Left lung (tissue), 14 donors: ENCODE measurements at regions of chr12 and their contacts with region 1.

Region 1: DNA sequence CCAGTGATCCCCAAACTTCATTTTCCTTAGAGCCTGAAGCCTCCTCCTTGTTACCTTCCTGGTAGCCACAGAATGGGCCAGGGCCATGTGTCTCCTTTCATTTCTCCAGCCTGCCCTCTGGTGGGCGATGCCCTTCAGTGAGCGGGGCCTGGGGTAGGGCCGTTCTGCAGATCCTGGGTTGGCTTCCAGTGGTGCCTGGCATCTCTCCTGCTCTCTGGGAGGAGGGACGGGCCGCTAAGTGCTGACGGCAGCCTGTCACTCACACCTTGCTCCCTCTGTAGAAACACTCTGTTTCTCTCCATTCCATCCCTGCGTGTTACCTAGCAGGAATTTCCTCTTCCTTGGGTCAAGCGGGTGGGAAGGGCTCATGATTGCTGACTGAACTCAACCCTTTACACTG is 232.1 kb downstream of the CACNA1C start:
- DNase-seq: peak in 2 of 4 donors; percentile 64 to 65
- ATAC-seq: peak; percentile 72
- H3K4me3 ChIP-seq: no peak overlapping the region
- H3K27ac ChIP-seq: peak overlapping the region; percentile 27 to 56
- H3K4me1 ChIP-seq: peaks cover 28 to 44% of the 10 kb centered on the region in 2 donors
- H3K27me3 ChIP-seq: peaks cover 0 to 11% of the 10 kb centered on the region in 2 donors
- CTCF ChIP-seq: peak; percentile 39 to 57

Region 2: DNA sequence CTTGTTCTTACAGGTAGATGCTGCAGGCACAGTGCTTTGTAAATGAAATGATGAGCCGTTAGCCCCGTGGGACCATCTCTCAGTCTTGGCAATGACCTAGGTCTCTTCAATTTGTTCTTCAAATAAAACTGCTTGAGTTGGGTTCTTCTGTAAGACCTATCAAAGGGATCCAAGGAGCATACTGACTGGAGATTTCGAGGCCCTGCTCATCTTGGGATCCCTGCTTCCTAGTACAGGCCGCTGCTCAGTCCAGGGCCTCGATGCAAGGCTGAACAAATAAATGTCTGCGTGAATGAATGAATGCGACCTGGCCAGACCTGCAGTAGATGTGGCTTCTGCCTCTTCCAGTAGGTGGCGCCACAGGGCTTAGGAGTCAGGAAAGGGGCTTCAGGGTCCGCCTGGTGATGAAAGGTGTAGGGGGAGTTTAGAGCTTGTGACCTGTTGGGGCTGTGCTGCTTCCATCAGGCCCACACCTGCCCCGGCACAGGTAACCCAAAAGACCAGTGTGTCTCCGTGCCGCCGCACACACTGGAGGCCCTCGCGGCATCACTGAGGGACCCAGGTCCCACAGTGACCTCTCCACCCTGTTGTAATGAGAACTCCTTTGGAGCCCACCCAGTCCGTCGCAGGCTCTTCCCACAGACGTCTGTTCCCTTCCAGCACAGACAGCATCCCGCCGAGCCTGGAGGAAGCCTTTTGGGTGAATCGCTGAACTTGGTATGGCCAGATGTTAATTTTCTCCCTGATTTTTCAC is 227.6 kb before region 1 on chr12:
- intact Hi-C with region 1: loop called in 1 of 2 experiments (anchors 10 kb)
- DNase-seq: peak in 2 of 4 donors; percentile 51 to 53
- ATAC-seq: peak; percentile 51
- H3K4me3 ChIP-seq: no peak overlapping the region
- H3K27ac ChIP-seq: no peak overlapping the region
- H3K4me1 ChIP-seq: peaks cover 0 to 11% of the 10 kb centered on the region in 2 donors
- H3K27me3 ChIP-seq: peaks cover 19 to 53% of the 10 kb centered on the region in 2 donors
- CTCF ChIP-seq: peak; percentile 43 to 50

Region 3: GRCh38 chr12:2477009-2477766 is 192.3 kb after region 1 on chr12:
- intact Hi-C with region 1: no loop called
- DNase-seq: no peak
- ATAC-seq: no peak
- H3K4me3 ChIP-seq: no peak overlapping the region
- H3K27ac ChIP-seq: no peak overlapping the region
- H3K4me1 ChIP-seq: no peaks in the 10 kb centered on the region
- H3K27me3 ChIP-seq: no peaks in the 10 kb centered on the region
- CTCF ChIP-seq: no peak